Activated B cell treated with CpG ODN at 0.5 μM for 24 hours (primary cell): ENCODE measurements at regions of chr18 and their contacts with region 1.

Region 1: DNA sequence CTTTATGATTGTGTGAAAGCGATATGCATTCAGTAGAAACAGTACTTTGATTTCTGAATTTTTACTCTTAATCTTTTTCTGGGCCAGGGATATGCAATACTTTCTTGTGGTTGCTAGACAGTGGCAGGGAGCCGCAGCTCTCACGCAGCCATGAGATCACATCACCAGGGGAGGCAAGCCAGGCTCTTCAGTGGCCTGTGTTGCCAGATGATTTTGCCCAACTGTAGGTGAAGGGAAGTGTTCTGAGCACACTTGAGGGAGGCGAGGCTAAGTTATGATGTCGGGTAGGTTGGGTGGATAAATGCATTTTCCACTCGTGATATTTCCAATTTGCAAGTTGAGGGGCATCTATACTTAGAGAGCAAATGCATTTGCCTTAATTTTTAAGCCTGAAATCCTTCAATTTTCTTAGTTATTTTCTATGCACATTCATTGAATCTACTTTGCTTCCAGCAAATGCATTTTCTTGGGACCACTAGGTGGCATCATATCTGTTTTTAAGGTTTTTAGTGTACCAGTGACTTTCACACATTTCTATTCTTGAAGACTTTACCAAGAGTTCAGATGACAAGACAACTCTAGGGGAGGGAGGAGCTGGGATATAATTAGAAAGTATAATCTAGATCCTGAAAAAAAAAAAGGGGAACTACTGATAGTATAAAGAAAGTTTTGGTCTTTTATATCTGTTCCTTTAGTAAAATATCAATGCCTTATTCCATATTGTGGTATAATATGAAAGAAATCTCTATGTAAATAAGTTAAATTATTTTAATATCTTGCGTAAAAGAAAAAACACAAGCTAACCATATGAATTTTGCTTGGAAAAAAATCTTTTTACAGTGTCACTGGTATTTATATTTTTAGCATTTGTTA is 643.3 kb downstream of the SOCS6 start:
- DNase-seq: no peak
- ATAC-seq: no peak
- H3K4me3 Mint-ChIP-seq: no peak overlapping the region
- H3K27ac Mint-ChIP-seq: no peak overlapping the region
- H3K4me1 Mint-ChIP-seq: no peaks in the 10 kb centered on the region
- H3K27me3 Mint-ChIP-seq: no peaks in the 10 kb centered on the region
- CTCF ChIP-seq: no peak

Region 2: DNA sequence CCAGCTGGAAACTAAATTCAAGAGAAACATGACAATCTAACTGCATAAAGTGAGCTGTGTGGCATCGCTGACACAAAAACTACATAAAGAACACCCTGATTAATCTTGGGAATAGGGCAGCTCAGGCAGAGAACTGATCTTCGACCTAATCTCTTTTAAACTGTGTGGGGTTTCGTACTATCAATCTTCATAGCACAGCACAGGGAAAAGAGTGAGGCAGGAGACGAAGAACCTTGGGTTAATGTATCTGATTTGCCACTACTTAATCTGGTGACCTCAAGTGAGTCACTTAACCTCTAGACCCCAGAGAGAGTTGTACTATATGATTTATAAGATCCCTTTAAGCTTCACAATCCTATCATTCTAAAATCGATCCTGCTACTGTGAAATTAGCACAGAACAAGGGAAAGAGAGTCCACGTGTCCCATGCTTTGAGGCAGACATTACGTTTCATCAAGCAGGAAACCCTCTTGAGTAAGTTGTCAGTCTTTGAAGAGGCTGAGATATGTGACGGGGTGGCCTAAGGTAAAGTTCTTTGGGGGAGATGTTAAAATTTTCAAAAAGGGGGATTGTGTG is 123.6 kb before region 1 on chr18:
- CTCF ChIA-PET with region 1: no interaction called
- POLR2A ChIA-PET with region 1: no interaction called
- intact Hi-C with region 1: no loop called
- DNase-seq: no peak
- ATAC-seq: no peak
- H3K4me3 Mint-ChIP-seq: no peak overlapping the region
- H3K27ac Mint-ChIP-seq: no peak overlapping the region
- H3K4me1 Mint-ChIP-seq: no peaks in the 10 kb centered on the region
- H3K27me3 Mint-ChIP-seq: no peaks in the 10 kb centered on the region
- CTCF ChIP-seq: no peak

Region 3: GRCh38 chr18:71784777-71785176 is 852.6 kb after region 1 on chr18:
- CTCF ChIA-PET with region 1: interaction called, 4 read pairs
- POLR2A ChIA-PET with region 1: no interaction called
- intact Hi-C with region 1: loop called (anchors 2 kb)
- DNase-seq: no peak
- ATAC-seq: no peak
- H3K4me3 Mint-ChIP-seq: no peak overlapping the region
- H3K27ac Mint-ChIP-seq: no peak overlapping the region
- H3K4me1 Mint-ChIP-seq: no peaks in the 10 kb centered on the region
- H3K27me3 Mint-ChIP-seq: no peaks in the 10 kb centered on the region
- CTCF ChIP-seq: no peak